ENCODE measurements at regions of chr19 and their contacts with region 1.

Region 1: DNA sequence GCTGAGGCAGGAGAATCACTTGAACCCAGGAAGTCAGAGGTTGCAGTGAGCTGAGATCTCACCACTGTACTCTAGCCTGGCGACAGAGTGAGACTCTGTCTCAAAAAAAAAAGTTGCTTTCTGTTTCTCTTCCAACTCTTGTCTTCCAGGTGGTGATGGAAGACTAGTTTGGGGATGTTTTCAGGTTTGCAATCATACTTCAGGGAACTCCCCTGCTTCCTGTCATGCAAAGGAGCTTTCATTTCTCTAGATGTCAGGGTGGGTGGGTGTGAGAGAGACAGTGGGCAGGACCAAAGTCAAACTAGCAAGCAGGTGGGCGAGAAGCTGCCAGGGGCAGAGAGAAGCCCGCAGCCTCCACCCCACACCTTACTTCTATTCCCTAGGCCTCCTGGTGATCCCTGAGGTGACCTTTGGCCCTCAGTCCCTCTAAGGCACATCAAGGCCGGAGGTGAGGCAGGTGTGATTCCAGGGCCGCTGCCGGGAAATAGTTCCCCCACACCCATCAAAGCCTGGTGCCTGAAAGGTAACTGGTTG is 25.7 kb downstream of the CCNE1 start:
- DNase-seq: peak; percentile 43
- H3K4me3 Mint-ChIP-seq: peak overlapping the region; percentile 69
- H3K27ac Mint-ChIP-seq: peak overlapping the region; percentile 97
- H3K4me1 Mint-ChIP-seq: peaks cover 34% of the 10 kb centered on the region
- H3K27me3 Mint-ChIP-seq: no peaks in the 10 kb centered on the region

Region 2: DNA sequence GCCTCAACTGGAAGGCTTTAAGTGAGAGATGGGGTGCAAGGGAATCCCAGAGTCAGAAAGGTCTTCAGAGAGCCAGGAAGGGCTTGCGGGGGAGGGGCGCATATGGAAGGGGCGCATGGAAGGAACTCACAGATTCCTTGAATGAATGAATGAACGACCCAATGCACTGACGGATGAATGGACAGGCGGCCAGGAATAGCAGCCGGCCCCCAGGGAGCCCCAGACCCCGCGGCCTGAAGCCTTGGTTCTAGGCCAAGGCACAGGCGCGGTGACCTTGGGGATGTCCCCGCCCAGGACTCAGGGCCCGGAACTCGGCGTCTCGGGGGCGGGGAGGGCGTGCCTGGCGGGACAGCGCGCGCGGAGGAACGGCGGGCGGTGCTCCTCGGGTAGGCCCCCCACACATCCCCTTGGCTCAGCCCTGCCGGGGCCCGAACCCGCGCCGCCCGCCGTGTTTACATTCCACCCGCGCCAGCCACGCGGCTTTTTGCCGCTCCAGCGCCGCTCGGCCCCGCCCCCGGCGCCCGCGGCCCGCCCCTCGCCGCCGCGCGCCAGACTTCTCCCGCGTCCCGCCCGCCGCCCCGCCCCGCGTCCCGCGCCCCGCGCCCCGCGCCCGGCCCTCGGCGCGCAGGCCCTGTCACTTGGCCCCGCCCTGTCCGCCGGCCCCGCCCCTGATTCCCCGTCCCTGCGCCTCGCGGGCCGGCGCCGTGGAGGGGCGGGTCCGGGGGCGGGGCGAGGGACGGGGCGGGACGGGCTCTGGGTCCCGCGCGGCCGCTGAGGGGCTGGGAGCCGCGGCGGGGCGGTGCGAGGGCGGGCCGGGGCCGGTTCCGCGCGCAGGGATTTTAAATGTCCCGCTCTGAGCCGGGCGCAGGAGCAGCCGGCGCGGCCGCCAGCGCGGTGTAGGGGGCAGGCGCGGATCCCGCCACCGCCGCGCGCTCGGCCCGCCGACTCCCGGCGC is 26.1 kb before region 1 on chr19 and contains the start of gene CCNE1:
- intact Hi-C with region 1: loop called (anchors 2 kb)
- DNase-seq: peak; percentile 89
- H3K4me3 Mint-ChIP-seq: peak within 1 kb of the TSS; percentile 86
- H3K27ac Mint-ChIP-seq: peak within 1 kb of the TSS; percentile 95
- H3K4me1 Mint-ChIP-seq: peaks cover 17% of the 10 kb centered on the region
- H3K27me3 Mint-ChIP-seq: no peaks in the 10 kb centered on the region
- total RNA-seq, gene CCNE1: 37.4 and 39.6 TPM in 2 replicates